T-cell (primary cell): ENCODE measurements at regions of chr18 and their contacts with region 1.

Region 1: GRCh38 chr18:24138789-24139616 is at the start of gene CABYR:
- DNase-seq: peak; percentile 45 to 84 (median 76)
- ATAC-seq: peak; percentile 87 to 95 (median 90)
- H3K4me3 ChIP-seq: peak within 1 kb of the TSS; percentile 50 to 74
- H3K4me3 Mint-ChIP-seq: peak within 1 kb of the TSS; percentile 84 to 93 (median 86)
- H3K27ac ChIP-seq: no peak within 1 kb of the TSS
- H3K27ac Mint-ChIP-seq: peak within 1 kb of the TSS; percentile 58 to 83
- H3K4me1 ChIP-seq: peaks cover 0 to 19% of the 10 kb centered on the region in 2 experiments
- H3K4me1 Mint-ChIP-seq: peaks cover 15 to 32% (median 29%) of the 10 kb centered on the region in 3 donors
- H3K27me3 ChIP-seq: peaks cover 2 to 23% of the 10 kb centered on the region in 2 experiments
- H3K27me3 Mint-ChIP-seq: peaks cover 6 to 12% of the 10 kb centered on the region in 2 donors
- total RNA-seq, gene CABYR: 0.25 to 2.4 (median 1.1) TPM

Region 2: GRCh38 chr18:23930002-23930401 is 209.0 kb before region 1 on chr18:
- CTCF ChIA-PET with region 1: no interaction called
- POLR2A ChIA-PET with region 1: no interaction called
- DNase-seq: no peak
- ATAC-seq: peak in 1 of 4 experiments; percentile 5
- H3K4me3 ChIP-seq: no peak overlapping the region
- H3K4me3 Mint-ChIP-seq: peak overlapping the region in 1 of 3 donors; percentile 41
- H3K27ac ChIP-seq: peak overlapping the region; percentile 70
- H3K27ac Mint-ChIP-seq: peak overlapping the region; percentile 89 to 94
- H3K4me1 ChIP-seq: peaks cover 16 to 20% of the 10 kb centered on the region in 2 experiments
- H3K4me1 Mint-ChIP-seq: peaks cover 38 to 46% (median 40%) of the 10 kb centered on the region in 3 donors
- H3K27me3 ChIP-seq: no peaks in the 10 kb centered on the region
- H3K27me3 Mint-ChIP-seq: no peaks in the 10 kb centered on the region

Region 3: GRCh38 chr18:23941791-23942190 is 197.2 kb before region 1 on chr18:
- CTCF ChIA-PET with region 1: no interaction called
- POLR2A ChIA-PET with region 1: interaction called, 4 to 11 read pairs
- DNase-seq: no peak
- ATAC-seq: no peak
- H3K4me3 ChIP-seq: no peak overlapping the region
- H3K4me3 Mint-ChIP-seq: no peak overlapping the region
- H3K27ac ChIP-seq: no peak overlapping the region
- H3K27ac Mint-ChIP-seq: peak overlapping the region in 1 of 2 donors; percentile 30
- H3K4me1 ChIP-seq: peaks cover 27 to 42% of the 10 kb centered on the region in 2 experiments
- H3K4me1 Mint-ChIP-seq: peaks cover 47 to 64% (median 60%) of the 10 kb centered on the region in 3 donors
- H3K27me3 ChIP-seq: no peaks in the 10 kb centered on the region
- H3K27me3 Mint-ChIP-seq: no peaks in the 10 kb centered on the region

Region 4: DNA sequence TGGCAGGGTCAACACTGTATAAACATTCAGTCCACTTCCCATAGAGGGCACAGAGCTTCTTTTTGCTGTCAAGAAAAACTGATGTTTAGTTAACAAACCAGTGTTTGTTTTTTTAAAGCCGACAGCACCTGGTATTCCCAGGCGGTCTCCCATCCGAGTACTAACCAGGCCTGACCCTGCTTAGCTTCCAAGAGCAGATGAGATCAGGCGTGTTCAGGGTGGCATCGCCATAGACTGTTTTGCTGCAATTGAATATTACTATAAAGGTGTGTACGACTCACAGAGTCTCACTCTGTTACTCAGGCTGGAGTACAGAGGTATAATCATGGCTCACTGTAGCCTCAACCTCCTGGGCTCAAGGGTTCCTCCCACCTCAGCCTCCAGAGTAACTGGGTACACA is 31.4 kb after region 1 on chr18:
- CTCF ChIA-PET with region 1: no interaction called
- POLR2A ChIA-PET with region 1: no interaction called
- DNase-seq: no peak
- ATAC-seq: no peak
- H3K4me3 ChIP-seq: no peak overlapping the region
- H3K4me3 Mint-ChIP-seq: no peak overlapping the region
- H3K27ac ChIP-seq: no peak overlapping the region
- H3K27ac Mint-ChIP-seq: no peak overlapping the region
- H3K4me1 ChIP-seq: no peaks in the 10 kb centered on the region
- H3K4me1 Mint-ChIP-seq: no peaks in the 10 kb centered on the region
- H3K27me3 ChIP-seq: peaks cover 0 to 5% of the 10 kb centered on the region in 2 experiments
- H3K27me3 Mint-ChIP-seq: no peaks in the 10 kb centered on the region